IMR-90 (cell line): ENCODE measurements at regions of chr6 and their contacts with region 1.

Region 1: DNA sequence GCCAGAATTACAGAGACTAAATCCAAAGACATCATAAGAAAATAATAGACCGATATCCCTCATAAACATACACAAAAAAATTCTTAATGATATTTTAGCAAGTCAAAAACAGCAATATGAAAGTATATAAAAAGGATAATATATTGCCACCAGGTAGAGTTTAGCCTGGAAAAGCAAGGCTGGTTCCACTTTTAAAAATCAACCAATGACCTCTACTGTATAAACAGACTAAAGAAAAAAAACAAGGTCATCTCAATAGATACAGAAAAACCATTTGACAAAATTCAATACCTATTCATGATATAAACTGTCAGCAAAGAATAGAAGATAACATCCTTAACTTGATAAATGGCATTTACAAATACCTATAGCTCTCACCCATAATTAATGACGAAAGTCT is 9.7 kb downstream of the SERINC1 start:
- DNase-seq: no peak
- ATAC-seq: no peak
- H3K4me3 ChIP-seq: no peak overlapping the region
- H3K27ac ChIP-seq: no peak overlapping the region
- H3K4me1 ChIP-seq: peaks cover 2% of the 10 kb centered on the region; the same call in 1 of the 2 replicates
- H3K27me3 ChIP-seq: no peaks in the 10 kb centered on the region
- CTCF ChIP-seq: no peak
- POLR2A ChIP-seq: no peak
- RAD21 ChIP-seq: no peak

Region 2: DNA sequence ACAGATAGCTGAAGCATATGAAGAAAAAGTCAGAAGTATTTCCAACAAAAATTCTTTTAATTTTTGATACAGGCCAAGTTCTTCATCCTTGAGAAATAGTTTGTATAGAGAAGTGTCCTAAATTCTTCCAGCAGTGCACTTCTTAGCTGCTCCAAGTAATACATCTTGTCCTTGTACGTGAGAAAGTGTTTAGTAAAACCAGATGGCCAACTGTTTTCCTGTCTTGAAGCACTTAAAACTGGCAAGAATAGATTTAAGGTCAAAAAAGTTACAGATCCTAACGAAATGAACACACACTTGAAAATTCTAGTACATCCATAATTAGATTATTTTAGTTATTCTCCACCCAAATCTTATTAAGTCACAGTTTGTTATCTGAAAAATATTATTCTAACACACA is 114.6 kb before region 1 on chr6:
- CTCF ChIA-PET with region 1: no interaction called
- POLR2A ChIA-PET with region 1: no interaction called
- dilution Hi-C with region 1: no loop called
- in situ Hi-C with region 1: no loop called
- intact Hi-C with region 1: no loop called
- DNase-seq: no peak
- ATAC-seq: no peak
- H3K4me3 ChIP-seq: no peak overlapping the region
- H3K27ac ChIP-seq: no peak overlapping the region
- H3K4me1 ChIP-seq: no peaks in the 10 kb centered on the region
- H3K27me3 ChIP-seq: no peaks in the 10 kb centered on the region
- CTCF ChIP-seq: no peak
- POLR2A ChIP-seq: no peak
- RAD21 ChIP-seq: no peak

Region 3: DNA sequence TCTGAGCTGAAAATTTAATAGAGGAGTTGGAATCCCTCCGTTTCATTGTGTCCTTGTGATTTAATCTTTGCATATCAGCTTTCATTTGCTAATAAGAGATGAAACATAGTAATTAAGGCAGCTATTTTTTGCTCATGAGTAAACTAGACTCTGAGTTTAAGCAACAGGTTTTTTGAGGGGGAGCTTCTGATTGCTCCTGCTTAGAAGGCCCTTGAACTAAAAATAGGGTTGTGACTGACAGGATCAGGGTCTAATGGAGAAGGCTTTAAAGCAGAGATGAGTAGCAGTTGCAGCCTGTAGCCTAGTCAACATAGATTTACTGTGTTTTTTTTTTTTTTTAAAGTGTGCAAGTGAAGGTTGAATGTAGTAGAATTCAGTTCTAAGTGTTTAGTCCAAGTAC is 45.1 kb before region 1 on chr6:
- CTCF ChIA-PET with region 1: interaction called, 3 read pairs
- POLR2A ChIA-PET with region 1: no interaction called
- dilution Hi-C with region 1: no loop called
- in situ Hi-C with region 1: no loop called
- intact Hi-C with region 1: loop called (anchors 5 kb)
- DNase-seq: no peak
- ATAC-seq: no peak
- H3K4me3 ChIP-seq: no peak overlapping the region
- H3K27ac ChIP-seq: no peak overlapping the region
- H3K4me1 ChIP-seq: no peaks in the 10 kb centered on the region
- H3K27me3 ChIP-seq: no peaks in the 10 kb centered on the region
- CTCF ChIP-seq: no peak
- POLR2A ChIP-seq: no peak
- RAD21 ChIP-seq: no peak